ENCODE measurements at regions of chr7 and their contacts with region 1.

Region 1: GRCh38 chr7:47818796-47819606 is 129.3 kb downstream of the PKD1L1 start:
- DNase-seq: peak; percentile 70 to 80 (median 74)
- ATAC-seq: peak; percentile 85
- H3K4me3 ChIP-seq: no peak overlapping the region
- H3K27ac ChIP-seq: no peak overlapping the region
- H3K4me1 ChIP-seq: no peaks in the 10 kb centered on the region
- H3K27me3 ChIP-seq: no peaks in the 10 kb centered on the region
- CTCF ChIP-seq: peak; percentile 71 to 96 (median 95)
- POLR2A ChIP-seq: no peak

Region 2: GRCh38 chr7:47273974-47274766 is 544.8 kb before region 1 on chr7:
- intact Hi-C with region 1: loop called (anchors 10 kb)
- DNase-seq: no peak
- ATAC-seq: no peak
- H3K4me3 ChIP-seq: no peak overlapping the region
- H3K27ac ChIP-seq: no peak overlapping the region
- H3K4me1 ChIP-seq: no peaks in the 10 kb centered on the region
- H3K27me3 ChIP-seq: no peaks in the 10 kb centered on the region
- CTCF ChIP-seq: no peak
- POLR2A ChIP-seq: no peak

Region 3: GRCh38 chr7:47435889-47436312 is 383.1 kb before region 1 on chr7:
- intact Hi-C with region 1: loop called (anchors 10 kb)
- DNase-seq: peak; percentile 59 to 74 (median 67)
- ATAC-seq: peak; percentile 74
- H3K4me3 ChIP-seq: no peak overlapping the region
- H3K27ac ChIP-seq: peak overlapping the region in 1 of 4 donors; percentile 9
- H3K4me1 ChIP-seq: peaks cover 13% of the 10 kb centered on the region
- H3K27me3 ChIP-seq: no peaks in the 10 kb centered on the region
- CTCF ChIP-seq: peak; percentile 30 to 67 (median 57)
- POLR2A ChIP-seq: no peak

Region 4: DNA sequence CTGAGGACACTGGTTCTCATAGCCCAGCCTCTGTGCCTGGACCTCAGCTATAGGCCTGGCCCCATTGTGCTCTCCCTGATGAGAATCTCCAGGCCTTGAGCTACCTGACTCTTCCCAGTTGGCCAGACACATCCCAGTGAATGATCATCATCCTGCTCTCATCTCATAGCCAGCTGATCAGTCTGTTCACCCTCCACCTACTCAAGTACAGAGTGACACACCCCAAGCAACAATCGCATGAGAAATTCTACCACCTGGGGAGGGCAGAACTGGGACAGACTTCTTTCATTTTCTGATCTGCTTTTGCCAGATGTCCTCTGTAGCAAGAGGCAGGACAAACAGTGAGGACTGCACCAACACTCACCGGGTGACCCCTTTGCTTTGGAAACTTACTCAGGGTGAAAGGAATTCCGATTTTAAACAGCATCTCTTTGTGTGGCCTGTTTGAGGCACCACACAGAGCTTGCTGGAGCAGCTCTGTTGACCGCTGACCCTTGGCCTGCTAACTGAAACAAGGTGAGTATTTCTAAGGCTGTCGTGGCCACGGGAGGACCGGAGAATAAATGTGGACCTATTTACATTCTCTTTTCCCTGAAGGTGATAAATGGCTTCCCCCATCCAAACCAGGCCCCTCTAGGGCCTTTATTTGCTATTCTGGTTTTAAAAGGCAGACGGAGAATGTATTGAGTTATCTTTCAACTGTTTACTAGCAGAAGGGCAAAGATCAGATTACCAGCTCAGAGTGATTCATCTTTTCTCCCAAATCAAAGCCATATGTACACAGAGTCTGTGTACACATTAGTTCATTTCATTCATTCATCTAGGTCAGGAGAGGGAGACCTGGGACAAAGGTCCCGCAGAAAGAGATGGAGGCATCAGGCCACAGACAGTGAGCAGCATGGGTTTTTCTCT is 55.7 kb before region 1 on chr7:
- intact Hi-C with region 1: no loop called
- DNase-seq: peak in 1 of 4 donors; percentile 15
- ATAC-seq: peak; percentile 60
- H3K4me3 ChIP-seq: no peak overlapping the region
- H3K27ac ChIP-seq: peak overlapping the region in 2 of 4 donors; percentile 38 to 60
- H3K4me1 ChIP-seq: peaks cover 5% of the 10 kb centered on the region
- H3K27me3 ChIP-seq: no peaks in the 10 kb centered on the region
- CTCF ChIP-seq: no peak
- POLR2A ChIP-seq: no peak